Activated T-helper 1 cell treated with anti-CD3 and anti-CD28 coated beads, Interleukin-12 subunit alpha, Interleukin-12 subunit beta, Interleukin-2, Interleukin-4 antibody, amounts not matched to agents 30 ng/mL and 10 ng/mL and 1 ng/mL, durations not matched to agents 14 hours and 24 hours and 36 hours (primary cell): ENCODE measurements at regions of chr1 and their contacts with region 1.

Region 1: GRCh38 chr1:229625915-229626831 is at the starts of genes TAF5L and URB2:
- DNase-seq: peak; percentile 87
- H3K4me3 Mint-ChIP-seq: peak within 1 kb of the TSS; percentile 97
- H3K27ac Mint-ChIP-seq: peak within 1 kb of the TSS; percentile 95
- H3K4me1 Mint-ChIP-seq: peaks cover 59% of the 10 kb centered on the region
- H3K27me3 Mint-ChIP-seq: no peaks in the 10 kb centered on the region
- total RNA-seq, gene TAF5L: 35.8 and 37.9 TPM in 2 replicates
- total RNA-seq, gene URB2: 37.3 and 38.4 TPM in 2 replicates

Region 2: GRCh38 chr1:229270547-229271447 is 355.4 kb before region 1 on chr1 and contains the start of gene RAB4A:
- intact Hi-C with region 1: loop called (anchors 5 kb)
- DNase-seq: peak; percentile 78
- H3K4me3 Mint-ChIP-seq: peak within 1 kb of the TSS; percentile 91
- H3K27ac Mint-ChIP-seq: peak within 1 kb of the TSS; percentile 82
- H3K4me1 Mint-ChIP-seq: peaks cover 19% of the 10 kb centered on the region
- H3K27me3 Mint-ChIP-seq: peaks cover 2% of the 10 kb centered on the region
- total RNA-seq, gene RAB4A: 29.0 and 29.3 TPM in 2 replicates

Region 3: GRCh38 chr1:229507951-229508822 is 118.0 kb before region 1 on chr1 and contains the start of gene NUP133:
- intact Hi-C with region 1: loop called (anchors 1 kb)
- DNase-seq: peak; percentile 97
- H3K4me3 Mint-ChIP-seq: peak within 1 kb of the TSS; percentile 96
- H3K27ac Mint-ChIP-seq: peak within 1 kb of the TSS; percentile 97
- H3K4me1 Mint-ChIP-seq: peaks cover 25% of the 10 kb centered on the region
- H3K27me3 Mint-ChIP-seq: peaks cover 4% of the 10 kb centered on the region
- total RNA-seq, gene NUP133: 47.9 and 49.1 TPM in 2 replicates

Region 4: GRCh38 chr1:229661022-229661877 is 35.1 kb after region 1 on chr1:
- intact Hi-C with region 1: loop called (anchors 1 kb)
- DNase-seq: peak; percentile 49
- H3K4me3 Mint-ChIP-seq: no peak overlapping the region
- H3K27ac Mint-ChIP-seq: no peak overlapping the region
- H3K4me1 Mint-ChIP-seq: peaks cover 21% of the 10 kb centered on the region
- H3K27me3 Mint-ChIP-seq: no peaks in the 10 kb centered on the region

Region 5: GRCh38 chr1:230867903-230868735 is 1241.9 kb after region 1 on chr1 and contains the start of gene C1orf198:
- intact Hi-C with region 1: loop called (anchors 10 kb)
- DNase-seq: peak; percentile 59
- H3K4me3 Mint-ChIP-seq: peak within 1 kb of the TSS; percentile 87
- H3K27ac Mint-ChIP-seq: peak within 1 kb of the TSS; percentile 80
- H3K4me1 Mint-ChIP-seq: peaks cover 28% of the 10 kb centered on the region
- H3K27me3 Mint-ChIP-seq: peaks cover 39% of the 10 kb centered on the region
- total RNA-seq, gene C1orf198: 14.1 and 14.6 TPM in 2 replicates

Region 6: GRCh38 chr1:231528172-231529029 is 1902.2 kb after region 1 on chr1 and contains the start of gene TSNAX:
- intact Hi-C with region 1: loop called (anchors 2 kb)
- DNase-seq: peak; percentile 88
- H3K4me3 Mint-ChIP-seq: peak within 1 kb of the TSS; percentile 93
- H3K27ac Mint-ChIP-seq: peak within 1 kb of the TSS; percentile 98
- H3K4me1 Mint-ChIP-seq: peaks cover 38% of the 10 kb centered on the region
- H3K27me3 Mint-ChIP-seq: no peaks in the 10 kb centered on the region
- total RNA-seq, gene TSNAX: 42.7 and 47.1 TPM in 2 replicates